MCF 10A (cell line): ENCODE measurements at regions of chr10 and their contacts with region 1.

Region 1: DNA sequence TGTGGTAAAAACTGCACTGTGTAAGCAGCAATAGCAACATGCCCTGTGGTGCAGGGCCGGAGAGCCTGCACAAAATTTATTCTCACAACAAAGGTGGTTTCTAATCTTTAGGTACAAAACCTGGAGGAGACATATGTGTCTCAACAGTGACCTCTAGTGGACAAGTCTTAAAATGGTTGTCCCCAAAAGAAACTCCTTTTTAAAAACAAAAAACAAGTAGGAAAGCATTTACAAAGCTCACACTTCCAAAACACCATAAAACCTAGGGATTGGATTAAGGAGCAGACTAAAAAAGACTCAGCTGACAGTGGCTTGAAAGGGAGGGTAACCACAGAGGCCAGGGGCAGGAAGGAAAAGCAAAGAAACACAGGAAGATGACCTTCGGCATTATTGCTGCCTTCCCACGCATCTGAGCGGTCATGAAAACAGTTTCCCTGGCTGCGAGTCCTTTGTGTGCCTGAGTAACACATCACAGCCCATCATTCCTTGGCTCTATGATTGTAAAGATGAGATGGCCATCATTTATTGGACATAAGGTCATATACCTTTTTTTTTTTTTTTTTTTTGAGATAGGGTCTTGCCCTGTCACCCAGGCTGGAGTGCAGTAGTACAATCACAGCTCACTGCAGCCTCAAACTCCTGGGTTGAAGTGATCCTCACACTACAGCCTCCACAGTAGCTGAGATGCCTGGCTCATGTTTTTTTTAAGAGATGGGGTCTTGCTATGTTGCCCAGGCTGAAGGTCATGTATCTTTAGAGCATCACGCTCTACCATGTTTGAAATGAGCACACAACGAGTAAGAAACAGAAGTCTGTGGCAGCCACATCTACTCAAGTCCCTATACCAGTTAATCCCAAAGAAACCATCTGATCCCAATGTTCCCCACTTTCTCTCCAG is 39.5 kb downstream of the RSU1 start:
- DNase-seq: peak; percentile 63
- H3K4me3 Mint-ChIP-seq: no peak overlapping the region
- H3K27ac Mint-ChIP-seq: no peak overlapping the region
- H3K4me1 Mint-ChIP-seq: no peaks in the 10 kb centered on the region
- H3K27me3 Mint-ChIP-seq: no peaks in the 10 kb centered on the region
- CTCF ChIP-seq: peak; percentile 70

Region 2: DNA sequence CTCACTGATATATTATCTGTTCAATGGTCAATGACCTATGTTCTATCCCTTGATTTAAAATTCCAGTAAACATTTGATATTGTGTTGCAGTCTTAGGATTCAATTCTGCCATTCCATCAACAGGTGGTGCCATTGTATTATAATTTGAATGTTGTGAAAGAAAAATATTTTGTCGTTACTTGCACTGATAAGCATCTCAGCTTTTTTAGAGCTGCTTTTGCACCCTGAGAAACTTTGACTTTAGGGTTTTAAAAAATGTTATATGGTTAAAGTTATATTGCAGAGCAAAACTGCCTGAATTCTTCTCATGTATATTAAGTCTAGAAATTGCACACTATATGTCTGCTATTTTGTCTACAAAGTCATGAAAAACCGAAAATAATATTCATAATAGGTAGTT is 898.7 kb before region 1 on chr10:
- CTCF ChIA-PET with region 1: interaction called, 7 read pairs
- POLR2A ChIA-PET with region 1: no interaction called
- intact Hi-C with region 1: loop called (anchors 10 kb)
- DNase-seq: peak; percentile 47
- H3K4me3 Mint-ChIP-seq: no peak overlapping the region
- H3K27ac Mint-ChIP-seq: no peak overlapping the region
- H3K4me1 Mint-ChIP-seq: no peaks in the 10 kb centered on the region
- H3K27me3 Mint-ChIP-seq: peaks cover 70% of the 10 kb centered on the region
- CTCF ChIP-seq: peak; percentile 58

Region 3: GRCh38 chr10:15897287-15897686 is 880.4 kb before region 1 on chr10:
- CTCF ChIA-PET with region 1: interaction called, 24 read pairs
- POLR2A ChIA-PET with region 1: no interaction called
- intact Hi-C with region 1: loop called (anchors 1 kb)
- DNase-seq: peak; percentile 16
- H3K4me3 Mint-ChIP-seq: no peak overlapping the region
- H3K27ac Mint-ChIP-seq: no peak overlapping the region
- H3K4me1 Mint-ChIP-seq: peaks cover 5% of the 10 kb centered on the region
- H3K27me3 Mint-ChIP-seq: peaks cover 52% of the 10 kb centered on the region
- CTCF ChIP-seq: no peak

Region 4: GRCh38 chr10:16116404-16117304 is 661.1 kb before region 1 on chr10:
- CTCF ChIA-PET with region 1: interaction called, 3 read pairs
- POLR2A ChIA-PET with region 1: no interaction called
- intact Hi-C with region 1: loop called (anchors 1 kb)
- DNase-seq: peak; percentile 31
- H3K4me3 Mint-ChIP-seq: no peak overlapping the region
- H3K27ac Mint-ChIP-seq: no peak overlapping the region
- H3K4me1 Mint-ChIP-seq: no peaks in the 10 kb centered on the region
- H3K27me3 Mint-ChIP-seq: peaks cover 11% of the 10 kb centered on the region
- CTCF ChIP-seq: peak; percentile 41

Region 5: DNA sequence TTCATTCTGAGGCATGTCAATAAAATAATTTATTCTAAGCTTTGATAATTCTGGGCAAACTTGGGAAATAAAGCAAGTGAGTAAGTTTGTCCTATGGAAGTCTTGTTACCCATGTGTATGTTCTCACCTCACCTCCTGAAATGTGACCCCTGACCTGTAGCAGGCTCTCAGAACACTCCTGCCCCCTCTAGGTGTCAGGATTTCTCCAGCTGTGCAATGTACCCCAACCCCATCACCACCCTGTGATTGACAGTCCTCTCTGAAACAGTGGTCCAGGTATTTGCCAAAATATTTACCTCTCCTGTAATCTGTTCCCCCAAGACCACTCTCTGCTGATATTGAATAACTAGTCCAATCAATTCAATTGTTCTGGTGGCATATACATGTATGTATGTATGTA is 463.5 kb before region 1 on chr10:
- CTCF ChIA-PET with region 1: interaction called, 3 read pairs
- POLR2A ChIA-PET with region 1: no interaction called
- intact Hi-C with region 1: loop called (anchors 1 kb)
- DNase-seq: peak; percentile 23
- H3K4me3 Mint-ChIP-seq: no peak overlapping the region
- H3K27ac Mint-ChIP-seq: no peak overlapping the region
- H3K4me1 Mint-ChIP-seq: no peaks in the 10 kb centered on the region
- H3K27me3 Mint-ChIP-seq: no peaks in the 10 kb centered on the region
- CTCF ChIP-seq: peak; percentile 22

Region 6: GRCh38 chr10:16570731-16571130 is 207.0 kb before region 1 on chr10:
- CTCF ChIA-PET with region 1: no interaction called
- POLR2A ChIA-PET with region 1: no interaction called
- intact Hi-C with region 1: loop called (anchors 10 kb)
- DNase-seq: no peak
- H3K4me3 Mint-ChIP-seq: no peak overlapping the region
- H3K27ac Mint-ChIP-seq: no peak overlapping the region
- H3K4me1 Mint-ChIP-seq: no peaks in the 10 kb centered on the region
- H3K27me3 Mint-ChIP-seq: peaks cover 26% of the 10 kb centered on the region
- CTCF ChIP-seq: no peak

Region 7: GRCh38 chr10:16765509-16766375 is 12.0 kb before region 1 on chr10:
- CTCF ChIA-PET with region 1: interaction called, 10 read pairs
- POLR2A ChIA-PET with region 1: no interaction called
- intact Hi-C with region 1: no loop called
- DNase-seq: no peak
- H3K4me3 Mint-ChIP-seq: no peak overlapping the region
- H3K27ac Mint-ChIP-seq: no peak overlapping the region
- H3K4me1 Mint-ChIP-seq: no peaks in the 10 kb centered on the region
- H3K27me3 Mint-ChIP-seq: no peaks in the 10 kb centered on the region
- CTCF ChIP-seq: no peak